Heart right ventricle (tissue), 16 donors: ENCODE measurements at regions of chr5 and their contacts with region 1.

Region 1: GRCh38 chr5:56696900-56697299 is 118.4 kb upstream of the MAP3K1 start:
- DNase-seq: peak in 1 of 2 donors; percentile 49
- ATAC-seq: no peak
- H3K4me3 ChIP-seq: no peak overlapping the region
- H3K27ac ChIP-seq: peak overlapping the region in 2 of 10 donors; percentile 7 to 30
- H3K4me1 ChIP-seq: peaks cover 4 to 42% (median 23%) of the 10 kb centered on the region in 9 donors
- H3K27me3 ChIP-seq: no peaks in the 10 kb centered on the region
- CTCF ChIP-seq: no peak

Region 2: GRCh38 chr5:56517011-56517416 is 179.9 kb before region 1 on chr5:
- intact Hi-C with region 1: no loop called
- DNase-seq: peak in 1 of 2 donors; percentile 35
- ATAC-seq: peak in 3 of 8 donors; percentile 20 to 41 (median 28)
- H3K4me3 ChIP-seq: no peak overlapping the region
- H3K27ac ChIP-seq: peak overlapping the region in 3 of 10 donors; percentile 46 to 51 (median 50)
- H3K4me1 ChIP-seq: peaks cover 3 to 49% (median 28%) of the 10 kb centered on the region in 9 donors
- H3K27me3 ChIP-seq: no peaks in the 10 kb centered on the region
- CTCF ChIP-seq: no peak

Region 3: DNA sequence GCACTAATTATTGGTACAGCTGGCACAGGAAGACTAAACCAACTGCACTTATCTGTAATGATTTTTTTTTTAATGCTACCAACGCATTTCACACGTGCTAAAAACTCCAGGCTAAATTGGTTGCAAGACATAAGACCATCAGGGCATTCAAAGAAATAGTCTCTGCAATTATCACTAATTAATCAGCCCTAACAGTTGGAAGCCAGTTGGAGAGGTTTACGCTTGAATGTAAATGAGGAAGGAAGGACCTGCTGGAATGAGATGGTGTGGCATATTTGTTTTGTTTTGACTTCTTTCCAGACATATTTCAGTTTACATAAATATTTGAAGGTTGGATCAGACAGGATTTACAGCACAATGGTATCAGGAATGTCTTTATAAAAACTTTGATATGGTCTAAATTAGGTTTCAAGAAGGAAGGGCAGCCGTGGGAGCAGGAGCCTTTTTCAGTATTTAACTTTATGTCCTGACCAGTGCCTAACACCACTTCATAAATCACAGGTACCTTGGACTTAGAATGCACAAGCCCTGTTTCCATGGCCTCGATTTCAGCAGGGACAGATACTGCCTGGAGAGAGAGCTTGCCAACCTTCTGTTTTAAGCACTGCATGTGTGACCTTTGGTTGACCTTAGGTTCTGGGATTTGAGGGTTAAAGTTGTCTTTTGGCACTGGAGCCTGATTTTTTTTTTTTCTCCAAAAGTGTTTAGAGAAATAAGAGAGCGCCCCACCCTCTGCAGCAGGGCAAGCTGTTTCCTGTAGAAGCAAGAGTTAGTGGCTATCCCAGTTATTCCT is 81.3 kb before region 1 on chr5:
- intact Hi-C with region 1: loop called in 1 of 10 experiments (anchors 5 kb)
- DNase-seq: peak in 1 of 2 donors; percentile 13
- ATAC-seq: peak; percentile 71 to 88 (median 77)
- H3K4me3 ChIP-seq: peak overlapping the region in 1 of 10 donors; percentile 9
- H3K27ac ChIP-seq: peak overlapping the region in 9 of 10 donors; percentile 17 to 71 (median 49)
- H3K4me1 ChIP-seq: peaks cover 8 to 27% (median 22%) of the 10 kb centered on the region in 9 donors
- H3K27me3 ChIP-seq: no peaks in the 10 kb centered on the region
- CTCF ChIP-seq: no peak

Region 4: DNA sequence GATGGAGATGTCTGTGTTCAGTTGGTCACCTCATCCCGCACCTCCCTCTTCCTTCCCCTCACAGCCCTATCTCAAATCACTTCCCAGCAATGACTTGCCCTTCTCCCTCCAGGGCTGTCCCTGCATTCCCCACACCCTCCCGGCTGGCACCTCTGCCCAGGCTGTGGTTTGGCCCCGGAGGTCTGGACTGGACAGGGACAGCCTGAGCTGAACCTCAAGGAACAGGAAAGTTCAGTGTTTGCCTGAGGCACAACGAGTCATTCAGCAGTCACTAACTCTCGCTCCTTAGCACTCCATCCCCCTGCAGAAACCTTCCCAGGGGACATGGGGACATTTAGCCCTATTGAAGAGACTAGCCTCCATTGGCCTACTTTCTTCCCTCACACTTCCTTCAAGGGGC is 60.2 kb after region 1 on chr5:
- intact Hi-C with region 1: no loop called
- DNase-seq: no peak
- ATAC-seq: no peak
- H3K4me3 ChIP-seq: no peak overlapping the region
- H3K27ac ChIP-seq: no peak overlapping the region
- H3K4me1 ChIP-seq: peaks cover 0 to 30% (median 25%) of the 10 kb centered on the region in 9 donors
- H3K27me3 ChIP-seq: no peaks in the 10 kb centered on the region
- CTCF ChIP-seq: no peak